Sigmoid colon (tissue), 7 donors: ENCODE measurements at regions of chr6 and their contacts with region 1.

Region 1: DNA sequence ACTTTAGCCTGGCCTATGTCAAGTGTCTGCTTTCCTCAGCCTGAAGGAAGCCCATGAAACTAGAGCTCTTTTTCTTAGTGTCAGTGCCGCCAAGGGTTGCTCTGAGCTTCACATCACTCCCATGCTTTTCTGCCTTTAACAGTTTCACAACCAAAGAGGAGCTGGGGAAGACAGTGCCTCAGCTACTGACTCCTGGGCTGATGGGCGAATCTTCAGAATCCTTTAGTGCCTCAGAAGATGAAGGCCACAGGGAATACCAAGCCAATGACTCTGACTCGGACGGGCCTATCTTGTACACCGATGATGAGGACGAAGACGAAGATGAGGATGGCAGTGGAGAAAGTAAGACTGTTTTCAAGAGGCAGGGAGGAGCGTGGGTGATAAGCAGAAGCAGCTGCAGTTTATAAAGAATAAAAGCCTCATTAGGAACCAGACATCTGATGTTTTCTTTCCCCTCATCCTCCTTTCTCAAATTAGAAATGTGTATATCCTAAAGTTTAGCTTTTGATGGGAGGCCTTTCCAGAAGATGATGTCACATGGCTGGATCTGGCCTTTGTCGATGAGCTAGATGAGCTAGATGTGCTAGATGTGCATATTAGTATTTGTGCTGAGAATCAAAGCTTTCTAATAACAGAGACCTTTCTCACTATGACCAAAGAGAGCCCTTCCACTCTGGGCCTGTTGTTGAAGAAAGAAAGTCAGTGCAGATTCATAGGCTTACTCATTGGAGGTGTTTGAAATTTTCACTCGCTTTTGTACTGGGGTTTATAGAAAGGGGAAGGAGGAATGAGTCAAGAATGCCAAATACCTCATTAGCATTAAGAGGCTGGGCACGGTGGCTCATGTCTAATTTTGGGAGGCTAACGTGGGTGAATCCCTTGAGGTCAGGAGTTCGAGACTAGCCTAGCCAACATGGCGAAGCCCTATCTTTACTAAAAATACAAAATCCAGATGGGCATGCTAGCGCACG is 70.7 kb upstream of the LTV1 start:
- DNase-seq: no peak
- H3K4me3 ChIP-seq: no peak overlapping the region
- H3K27ac ChIP-seq: peak overlapping the region; percentile 19 to 59 (median 50)
- H3K4me1 ChIP-seq: peaks cover 0 to 45% (median 31%) of the 10 kb centered on the region in 4 donors
- H3K27me3 ChIP-seq: no peaks in the 10 kb centered on the region
- CTCF ChIP-seq: no peak
- EP300 ChIP-seq: no peak
- POLR2A ChIP-seq: no peak

Region 2: GRCh38 chr6:143575440-143575839 is 197.0 kb before region 1 on chr6:
- intact Hi-C with region 1: loop called (anchors 10 kb)
- DNase-seq: peak; percentile 74
- H3K4me3 ChIP-seq: no peak overlapping the region
- H3K27ac ChIP-seq: peak overlapping the region in 1 of 4 donors; percentile 6
- H3K4me1 ChIP-seq: no peaks in the 10 kb centered on the region
- H3K27me3 ChIP-seq: no peaks in the 10 kb centered on the region
- CTCF ChIP-seq: peak; percentile 78 to 90 (median 88)
- EP300 ChIP-seq: no peak
- POLR2A ChIP-seq: no peak

Region 3: DNA sequence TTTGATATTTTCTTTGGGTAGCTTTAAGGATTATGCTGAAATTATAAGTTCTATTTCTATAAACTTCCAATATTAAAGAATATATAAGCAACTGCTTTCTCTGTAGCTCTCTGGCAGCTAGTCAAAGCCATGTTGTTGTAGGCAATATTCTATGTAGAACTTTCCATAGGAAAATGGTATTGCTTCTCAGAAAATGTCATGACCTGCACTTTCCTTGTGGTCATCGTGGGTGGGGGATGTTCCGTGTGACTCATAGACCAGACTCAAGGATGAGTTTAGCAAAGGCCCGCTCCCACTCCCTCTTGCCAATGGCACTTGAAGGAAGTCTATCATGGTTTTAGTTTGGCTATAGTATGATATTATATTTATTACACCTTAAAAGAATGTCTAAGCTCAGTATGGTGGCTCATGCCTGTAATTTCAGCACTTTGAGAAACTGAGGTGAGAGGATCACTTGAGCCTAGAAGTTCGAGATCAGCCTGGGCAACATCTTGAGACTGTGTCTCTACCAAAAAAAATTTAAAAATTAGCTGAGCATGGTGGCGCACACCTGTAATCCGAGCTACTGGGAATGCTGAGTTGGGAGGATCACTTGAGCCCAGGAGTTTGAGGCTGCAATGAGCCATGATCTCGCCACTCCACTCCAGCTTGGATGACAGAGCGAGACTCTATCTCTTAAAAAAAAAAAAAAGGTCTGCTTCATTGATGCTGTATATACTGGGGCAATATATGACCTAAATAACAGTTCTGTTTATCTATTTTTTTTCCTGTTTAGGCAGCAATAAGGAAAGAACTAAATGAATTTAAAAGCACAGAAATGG is 34.1 kb after region 1 on chr6:
- intact Hi-C with region 1: no loop called
- DNase-seq: no peak
- H3K4me3 ChIP-seq: no peak overlapping the region
- H3K27ac ChIP-seq: no peak overlapping the region
- H3K4me1 ChIP-seq: no peaks in the 10 kb centered on the region
- H3K27me3 ChIP-seq: no peaks in the 10 kb centered on the region
- CTCF ChIP-seq: no peak
- EP300 ChIP-seq: no peak
- POLR2A ChIP-seq: no peak